ENCODE measurements at regions of chr5 and their contacts with region 1.

Region 1: DNA sequence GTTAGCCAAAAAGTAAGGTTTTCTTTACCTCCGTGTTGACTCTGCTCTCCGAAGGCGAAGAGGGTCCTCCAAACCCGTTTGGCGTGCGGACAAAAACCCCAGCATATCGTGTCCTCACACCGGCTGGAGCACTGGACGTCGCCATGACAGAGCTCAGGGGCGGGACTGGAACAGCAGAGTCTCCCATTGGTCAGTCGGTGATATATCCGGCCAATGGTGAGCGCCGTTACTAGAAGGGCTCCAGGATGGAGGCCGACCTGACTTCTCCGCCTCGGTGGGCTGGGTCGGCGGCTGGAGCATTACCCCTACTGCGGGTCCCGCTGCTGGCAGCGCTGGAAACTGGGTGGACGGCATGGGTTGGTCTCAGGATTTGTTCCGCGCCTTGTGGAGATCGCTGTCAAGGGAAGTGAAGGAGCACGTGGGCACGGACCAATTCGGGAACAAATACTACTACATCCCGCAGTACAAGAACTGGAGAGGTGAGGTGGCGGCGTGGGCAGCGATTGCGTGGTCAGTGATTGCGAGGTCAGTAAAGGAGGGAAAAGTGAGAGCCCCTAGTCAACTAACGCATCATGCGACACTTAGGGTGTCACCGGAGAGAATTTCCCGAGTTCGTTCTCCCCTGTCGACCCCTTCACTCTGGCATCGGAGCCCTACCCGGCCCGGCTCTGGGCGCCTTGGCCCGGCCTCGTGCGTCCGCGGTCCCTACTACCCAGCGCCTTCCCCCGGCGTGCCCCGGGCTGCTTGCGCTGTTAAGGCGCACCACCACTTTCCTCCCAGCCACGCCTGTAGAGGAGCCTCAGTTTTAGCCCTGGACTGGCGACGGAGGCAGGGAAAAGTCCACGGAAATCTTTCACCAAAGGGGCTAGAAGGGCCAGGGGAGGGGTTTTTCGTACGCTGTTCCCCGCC is at the starts of genes ERCC8 and NDUFAF2:
- DNase-seq: peak; percentile 92
- ATAC-seq: peak; percentile 100
- total RNA-seq, gene ERCC8: 5.2 TPM
- total RNA-seq, gene NDUFAF2: 36.1 TPM

Region 2: GRCh38 chr5:61416010-61416409 is 470.9 kb after region 1 on chr5:
- intact Hi-C with region 1: no loop called
- DNase-seq: no peak
- ATAC-seq: no peak

Region 3: DNA sequence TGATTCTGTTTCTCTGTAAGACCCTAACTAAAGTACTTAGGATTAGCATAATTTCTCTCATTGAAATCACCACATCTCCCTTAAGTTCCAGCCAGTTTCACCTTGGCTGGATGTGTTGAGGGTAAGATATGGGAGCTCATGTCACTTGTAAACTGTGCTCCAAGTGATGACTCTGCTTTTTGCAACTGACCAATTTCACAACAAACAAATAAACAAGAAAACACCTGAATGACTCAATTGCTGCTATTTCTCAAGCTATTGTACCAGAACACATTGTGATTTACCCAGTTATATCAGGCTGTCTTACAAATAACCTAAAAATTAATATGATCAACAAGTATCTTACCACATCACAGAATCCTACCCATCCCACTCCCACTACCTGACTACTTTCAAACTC is 981.8 kb after region 1 on chr5:
- intact Hi-C with region 1: loop called (anchors 5 kb)
- DNase-seq: no peak
- ATAC-seq: no peak